Sigmoid colon (tissue), 7 donors: ENCODE measurements at regions of chr14 and their contacts with region 1.

Region 1: GRCh38 chr14:69191340-69192111 is at the start of gene EXD2:
- DNase-seq: peak; percentile 94
- H3K4me3 ChIP-seq: peak within 1 kb of the TSS; percentile 69 to 90 (median 85)
- H3K27ac ChIP-seq: peak within 1 kb of the TSS; percentile 74 to 81 (median 80)
- H3K4me1 ChIP-seq: peaks cover 0 to 12% (median 5%) of the 10 kb centered on the region in 4 donors
- H3K27me3 ChIP-seq: no peaks in the 10 kb centered on the region
- CTCF ChIP-seq: no peak
- EP300 ChIP-seq: no peak
- POLR2A ChIP-seq: peak in 1 of 2 donors; percentile 7
- total RNA-seq, gene EXD2: 14.7 to 18.0 (median 16.8) TPM

Region 2: DNA sequence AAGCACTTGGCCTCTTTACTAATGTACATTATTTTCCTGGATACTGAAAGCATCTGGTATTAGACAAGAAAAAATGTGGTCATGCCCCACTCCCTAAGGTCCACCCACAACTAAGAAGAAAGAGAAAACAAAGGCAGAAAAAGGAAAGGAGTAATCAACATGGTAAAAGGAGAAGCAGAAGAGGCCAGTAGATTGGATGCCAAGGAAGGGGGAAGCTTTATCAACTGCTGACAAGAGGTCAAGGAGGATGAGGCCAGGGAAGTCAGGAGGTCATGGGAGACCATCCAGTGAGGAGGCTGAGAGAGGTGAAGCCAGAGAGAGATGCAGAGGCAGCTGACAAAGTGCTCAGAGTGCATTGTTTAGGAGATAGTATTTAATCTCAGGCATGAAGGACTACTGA is 782.1 kb before region 1 on chr14:
- intact Hi-C with region 1: no loop called
- DNase-seq: no peak
- H3K4me3 ChIP-seq: no peak overlapping the region
- H3K27ac ChIP-seq: no peak overlapping the region
- H3K4me1 ChIP-seq: peaks cover 0 to 4% (median 0%) of the 10 kb centered on the region in 4 donors
- H3K27me3 ChIP-seq: no peaks in the 10 kb centered on the region
- CTCF ChIP-seq: no peak
- EP300 ChIP-seq: no peak
- POLR2A ChIP-seq: no peak

Region 3: DNA sequence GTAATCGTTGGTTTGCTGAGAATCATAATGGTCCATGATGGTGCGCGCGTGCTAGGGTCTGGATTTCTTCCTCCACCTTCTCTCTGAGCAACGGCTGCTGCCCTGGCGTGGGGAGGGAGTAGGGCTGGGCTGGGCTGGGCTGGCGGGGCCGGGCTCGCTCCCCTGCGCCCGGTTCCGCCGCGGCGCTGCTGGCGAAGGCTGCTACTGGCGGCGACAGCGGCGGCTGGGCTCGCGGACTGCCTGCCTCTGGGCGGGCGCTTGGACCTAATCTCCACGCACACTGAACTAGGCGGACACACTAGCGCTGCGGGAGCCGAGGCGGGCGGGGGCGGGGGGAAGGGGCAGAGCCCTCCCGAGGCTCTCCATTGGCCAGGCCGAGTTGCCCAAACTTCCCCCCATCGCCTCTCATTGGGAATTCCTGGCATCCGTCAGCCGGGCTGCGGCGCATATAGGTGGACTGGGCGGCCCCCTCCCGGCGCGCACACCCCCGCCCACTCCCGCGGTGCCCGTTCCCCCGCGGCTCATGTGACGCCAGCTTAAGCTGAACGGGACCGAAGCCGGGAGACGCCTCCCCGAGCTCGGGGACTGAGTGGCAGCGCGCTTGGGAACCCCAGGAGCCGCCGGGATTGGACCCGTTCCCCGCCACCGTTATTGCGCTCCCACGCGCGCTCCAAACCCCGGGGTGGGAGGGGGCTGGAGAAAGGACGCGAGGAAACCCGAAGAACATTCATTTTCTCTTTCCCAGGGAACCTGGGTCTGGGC is 212.3 kb before region 1 on chr14 and contains the start of gene ACTN1:
- intact Hi-C with region 1: no loop called
- DNase-seq: peak; percentile 99
- H3K4me3 ChIP-seq: peak within 1 kb of the TSS; percentile 85 to 100 (median 97)
- H3K27ac ChIP-seq: peak within 1 kb of the TSS; percentile 98 to 100 (median 100)
- H3K4me1 ChIP-seq: peaks cover 0 to 70% (median 62%) of the 10 kb centered on the region in 4 donors
- H3K27me3 ChIP-seq: no peaks in the 10 kb centered on the region
- CTCF ChIP-seq: no peak
- EP300 ChIP-seq: peak in 1 of 4 donors; percentile 56
- POLR2A ChIP-seq: peak; percentile 87 to 88
- total RNA-seq, gene ACTN1: 372 to 1,069 (median 688) TPM

Region 4: GRCh38 chr14:69153131-69153872 is 38.2 kb before region 1 on chr14:
- intact Hi-C with region 1: loop called (anchors 1 kb)
- DNase-seq: peak; percentile 98
- H3K4me3 ChIP-seq: peak overlapping the region; percentile 72 to 93 (median 84)
- H3K27ac ChIP-seq: peak overlapping the region; percentile 96 to 99 (median 98)
- H3K4me1 ChIP-seq: peaks cover 0 to 40% (median 23%) of the 10 kb centered on the region in 4 donors
- H3K27me3 ChIP-seq: no peaks in the 10 kb centered on the region
- CTCF ChIP-seq: peak in 1 of 4 experiments; percentile 12
- EP300 ChIP-seq: peak in 1 of 4 donors; percentile 24
- POLR2A ChIP-seq: no peak

Region 5: DNA sequence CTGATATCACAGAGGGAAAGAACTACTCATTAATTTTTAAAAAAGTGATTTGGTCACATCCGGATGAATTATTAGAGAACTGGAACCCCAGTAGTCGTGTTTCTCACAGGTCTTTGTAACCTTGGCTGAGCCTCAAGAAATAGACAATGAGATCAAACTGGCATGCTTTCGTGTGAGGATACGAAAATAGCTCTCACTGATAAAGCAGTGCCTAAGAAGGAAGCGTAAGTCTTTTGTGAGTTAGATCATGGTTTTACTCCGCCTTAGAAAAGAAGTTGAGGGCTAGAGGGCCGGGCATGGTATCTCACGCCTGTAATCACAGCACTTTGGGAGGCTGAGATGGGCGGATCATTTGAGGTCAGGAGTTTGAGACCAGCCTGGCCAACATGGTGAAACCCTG is 34.7 kb after region 1 on chr14:
- intact Hi-C with region 1: no loop called
- DNase-seq: no peak
- H3K4me3 ChIP-seq: no peak overlapping the region
- H3K27ac ChIP-seq: peak overlapping the region; percentile 6 to 61 (median 38)
- H3K4me1 ChIP-seq: peaks cover 0 to 16% (median 10%) of the 10 kb centered on the region in 4 donors
- H3K27me3 ChIP-seq: no peaks in the 10 kb centered on the region
- CTCF ChIP-seq: no peak
- EP300 ChIP-seq: no peak
- POLR2A ChIP-seq: no peak